PC-3 (cell line): ENCODE measurements at regions of chr11 and their contacts with region 1.

Region 1: DNA sequence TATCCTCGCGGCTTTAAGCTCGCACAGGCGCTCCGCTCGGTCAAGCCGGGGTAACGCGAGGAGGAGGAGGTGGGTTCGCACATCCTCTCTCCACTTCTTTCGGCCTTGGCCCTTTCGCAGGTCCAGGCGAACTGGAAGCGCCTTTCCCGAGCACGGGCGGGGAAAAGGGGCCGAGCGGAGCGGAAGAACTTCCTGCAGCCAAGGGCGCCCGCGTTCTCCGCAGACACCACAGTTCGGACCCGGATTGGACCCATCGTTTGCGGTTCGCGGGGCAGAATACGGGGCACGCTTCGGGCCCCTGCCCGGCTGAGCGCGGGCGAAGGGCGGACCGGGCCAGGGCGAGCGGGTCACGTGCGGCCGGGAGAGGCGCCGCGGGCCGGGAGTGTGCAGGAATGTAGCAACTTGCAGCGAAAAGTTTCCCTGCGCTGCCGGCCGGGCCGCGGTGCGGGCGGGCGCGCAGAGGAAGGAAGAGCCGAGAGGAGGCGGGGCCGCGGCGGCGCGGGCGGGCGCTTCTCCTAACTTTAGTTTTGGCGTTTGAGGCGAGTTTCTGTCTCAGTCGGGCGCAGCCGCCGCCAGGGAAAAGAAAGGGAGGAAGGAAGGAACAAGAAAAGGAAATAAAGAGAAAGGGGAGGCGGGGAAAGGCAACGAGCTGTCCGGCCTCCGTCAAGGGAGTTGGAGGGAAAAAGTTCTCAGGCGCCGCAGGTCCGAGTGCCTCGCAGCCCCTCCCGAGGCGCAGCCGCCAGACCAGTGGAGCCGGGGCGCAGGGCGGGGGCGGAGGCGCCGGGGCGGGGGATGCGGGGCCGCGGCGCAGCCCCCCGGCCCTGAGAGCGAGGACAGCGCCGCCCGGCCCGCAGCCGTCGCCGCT is at the start of gene YAP1:
- DNase-seq: peak; percentile 95
- ATAC-seq: peak; percentile 53
- H3K4me3 ChIP-seq: peak within 1 kb of the TSS; percentile 70
- H3K27ac ChIP-seq: peak within 1 kb of the TSS; percentile 87
- H3K4me1 ChIP-seq: peaks cover 26% of the 10 kb centered on the region
- H3K27me3 ChIP-seq: no peaks in the 10 kb centered on the region
- CTCF ChIP-seq: no peak; the same call in 1 of the 2 replicates
- total RNA-seq, gene YAP1: 104 and 118 TPM in 2 replicates

Region 2: DNA sequence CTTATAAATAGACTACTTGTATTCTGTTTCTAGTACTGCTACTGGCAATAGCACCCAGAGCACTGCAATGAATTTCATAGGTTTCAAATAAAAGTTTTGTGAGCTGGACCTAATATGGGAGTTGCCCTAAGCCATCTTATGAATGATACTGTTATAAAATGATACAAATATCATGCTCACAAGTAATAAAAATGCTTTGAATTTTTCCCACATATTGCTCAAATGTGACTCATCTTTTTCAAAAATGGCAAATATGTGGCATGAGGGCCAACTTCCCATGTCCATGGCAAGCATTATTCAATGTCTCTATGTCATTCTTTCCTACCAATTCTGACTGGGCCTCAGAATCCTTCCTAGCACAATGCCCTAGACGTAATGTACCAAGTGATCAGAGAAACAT is 663.9 kb before region 1 on chr11:
- CTCF ChIA-PET with region 1: no interaction called
- POLR2A ChIA-PET with region 1: no interaction called
- intact Hi-C with region 1: loop called (anchors 5 kb)
- DNase-seq: peak; percentile 94
- ATAC-seq: peak; percentile 88
- H3K4me3 ChIP-seq: peak overlapping the region; percentile 0; the same call in 1 of the 2 replicates
- H3K27ac ChIP-seq: peak overlapping the region; percentile 79
- H3K4me1 ChIP-seq: peaks cover 41% of the 10 kb centered on the region
- H3K27me3 ChIP-seq: no peaks in the 10 kb centered on the region
- CTCF ChIP-seq: no peak

Region 3: GRCh38 chr11:101835506-101836063 is 274.5 kb before region 1 on chr11:
- CTCF ChIA-PET with region 1: no interaction called
- POLR2A ChIA-PET with region 1: no interaction called
- intact Hi-C with region 1: no loop called
- DNase-seq: peak; percentile 89
- ATAC-seq: peak; percentile 95
- H3K4me3 ChIP-seq: peak overlapping the region; percentile 33; the same call in 1 of the 2 replicates
- H3K27ac ChIP-seq: peak overlapping the region; percentile 55
- H3K4me1 ChIP-seq: peaks cover 14% of the 10 kb centered on the region
- H3K27me3 ChIP-seq: no peaks in the 10 kb centered on the region
- CTCF ChIP-seq: no peak

Region 4: DNA sequence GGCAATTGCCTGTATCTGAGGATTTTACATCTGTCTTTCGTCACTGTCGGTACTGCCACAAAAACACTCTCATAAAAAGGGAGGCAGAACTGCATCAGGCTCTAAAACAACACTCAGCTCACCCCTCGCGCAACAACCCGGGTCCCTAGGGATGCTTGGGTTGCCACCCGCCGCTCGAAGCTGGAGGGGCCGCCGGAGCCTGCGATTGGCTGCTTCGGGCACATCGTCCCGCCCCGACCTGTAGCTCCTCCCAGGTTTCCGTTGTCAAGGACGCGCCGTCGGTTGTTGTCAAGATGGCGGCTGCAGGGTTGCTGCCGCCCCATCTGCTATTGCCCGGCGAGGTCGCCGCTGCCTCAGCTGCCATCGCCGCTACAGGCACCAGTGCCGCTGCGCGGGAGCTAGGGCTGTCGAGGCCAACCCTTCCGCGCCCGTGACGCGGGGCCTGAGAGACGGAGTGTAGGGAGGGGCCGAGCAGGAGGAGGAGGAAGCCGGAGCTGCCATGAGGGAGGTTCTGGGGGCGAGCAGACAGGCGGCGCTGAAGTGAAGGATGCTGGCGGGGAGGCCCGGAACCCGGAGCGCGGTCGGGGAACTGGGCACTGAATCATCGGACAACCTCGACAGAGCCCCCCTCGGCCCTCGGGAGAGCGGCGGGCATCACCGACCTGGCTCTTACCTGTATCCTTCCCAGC is 195.2 kb before region 1 on chr11 and contains the start of gene CEP126:
- CTCF ChIA-PET with region 1: no interaction called
- POLR2A ChIA-PET with region 1: interaction called, 3 read pairs
- intact Hi-C with region 1: loop called (anchors 5 kb)
- DNase-seq: peak; percentile 95
- ATAC-seq: peak; percentile 89
- H3K4me3 ChIP-seq: peak within 1 kb of the TSS; percentile 78
- H3K27ac ChIP-seq: peak within 1 kb of the TSS; percentile 54
- H3K4me1 ChIP-seq: peaks cover 35% of the 10 kb centered on the region
- H3K27me3 ChIP-seq: no peaks in the 10 kb centered on the region
- CTCF ChIP-seq: peak; percentile 58
- total RNA-seq, gene CEP126: 1.0 and 2.5 TPM in 2 replicates

Region 5: DNA sequence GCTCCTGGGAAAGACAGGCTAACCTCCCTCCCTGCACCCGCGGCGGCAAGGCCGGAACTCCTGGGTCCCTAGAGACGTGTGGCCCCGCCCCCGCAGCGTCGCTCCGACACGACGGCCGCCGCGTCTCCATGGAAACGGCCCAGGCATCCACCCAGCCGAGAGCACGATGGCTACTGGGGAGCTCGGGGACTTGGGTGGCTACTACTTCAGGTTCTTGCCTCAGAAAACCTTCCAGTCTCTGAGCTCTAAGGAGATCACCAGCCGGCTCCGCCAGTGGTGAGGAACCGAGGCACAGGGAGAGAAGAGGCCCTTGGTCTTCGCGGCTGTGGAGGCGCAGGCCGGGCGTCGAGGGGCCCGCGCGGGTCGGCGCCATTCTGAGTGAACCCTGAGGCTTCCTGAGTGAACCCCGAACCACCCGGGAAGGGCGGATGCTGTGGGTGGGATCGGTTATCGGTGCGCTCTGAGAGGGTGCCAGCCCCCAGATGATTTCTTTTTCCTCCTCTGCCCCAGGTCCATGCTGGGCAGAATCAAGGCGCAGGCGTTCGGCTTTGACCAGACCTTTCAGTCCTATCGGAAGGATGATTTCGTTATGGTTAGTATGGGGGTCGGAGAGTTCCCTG is 62.7 kb before region 1 on chr11 and contains the start of gene CFAP300:
- CTCF ChIA-PET with region 1: no interaction called
- POLR2A ChIA-PET with region 1: no interaction called
- intact Hi-C with region 1: loop called (anchors 1 kb)
- DNase-seq: peak; percentile 77
- ATAC-seq: peak; percentile 95
- H3K4me3 ChIP-seq: peak within 1 kb of the TSS; percentile 78
- H3K27ac ChIP-seq: no peak within 1 kb of the TSS
- H3K4me1 ChIP-seq: no peaks in the 10 kb centered on the region
- H3K27me3 ChIP-seq: no peaks in the 10 kb centered on the region
- CTCF ChIP-seq: no peak
- total RNA-seq, gene CFAP300: 3.2 and 3.9 TPM in 2 replicates

Region 6: DNA sequence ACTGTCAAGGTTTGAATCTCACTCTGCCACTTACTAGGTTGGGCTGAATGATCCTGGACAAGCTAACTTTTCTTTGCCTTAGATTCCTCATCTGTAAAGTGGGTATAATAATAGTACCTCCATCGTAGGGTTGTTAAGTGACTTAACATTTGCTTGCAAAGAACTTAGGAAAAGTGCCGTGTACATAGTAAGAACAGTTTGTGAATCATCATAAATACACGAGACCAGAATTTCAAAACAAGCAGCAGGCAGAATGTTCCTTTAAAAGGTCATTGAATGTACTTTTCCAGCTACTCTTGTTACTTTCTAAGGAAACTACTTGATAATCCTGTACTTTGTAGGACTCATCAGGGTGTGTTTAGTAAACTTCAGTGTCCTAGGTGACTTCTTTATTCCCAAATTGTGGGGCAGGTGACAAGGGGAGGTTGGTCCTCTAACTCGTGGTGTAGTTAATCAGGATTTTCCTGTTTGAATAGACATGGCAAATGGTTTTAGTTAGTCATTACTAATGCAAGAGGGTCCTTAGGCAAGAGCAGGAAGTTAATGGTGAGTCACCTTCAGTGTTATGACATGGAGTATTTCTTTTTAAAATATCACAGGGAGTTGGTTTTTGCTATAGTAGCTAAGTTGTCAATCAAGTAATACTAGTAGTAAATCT is 68.0 kb after region 1 on chr11:
- CTCF ChIA-PET with region 1: no interaction called
- POLR2A ChIA-PET with region 1: no interaction called
- intact Hi-C with region 1: loop called (anchors 1 kb)
- DNase-seq: peak; percentile 99
- ATAC-seq: peak; percentile 90
- H3K4me3 ChIP-seq: peak overlapping the region; percentile 26; the same call in 1 of the 2 replicates
- H3K27ac ChIP-seq: peak overlapping the region; percentile 80
- H3K4me1 ChIP-seq: peaks cover 27% of the 10 kb centered on the region
- H3K27me3 ChIP-seq: no peaks in the 10 kb centered on the region
- CTCF ChIP-seq: no peak

Region 7: DNA sequence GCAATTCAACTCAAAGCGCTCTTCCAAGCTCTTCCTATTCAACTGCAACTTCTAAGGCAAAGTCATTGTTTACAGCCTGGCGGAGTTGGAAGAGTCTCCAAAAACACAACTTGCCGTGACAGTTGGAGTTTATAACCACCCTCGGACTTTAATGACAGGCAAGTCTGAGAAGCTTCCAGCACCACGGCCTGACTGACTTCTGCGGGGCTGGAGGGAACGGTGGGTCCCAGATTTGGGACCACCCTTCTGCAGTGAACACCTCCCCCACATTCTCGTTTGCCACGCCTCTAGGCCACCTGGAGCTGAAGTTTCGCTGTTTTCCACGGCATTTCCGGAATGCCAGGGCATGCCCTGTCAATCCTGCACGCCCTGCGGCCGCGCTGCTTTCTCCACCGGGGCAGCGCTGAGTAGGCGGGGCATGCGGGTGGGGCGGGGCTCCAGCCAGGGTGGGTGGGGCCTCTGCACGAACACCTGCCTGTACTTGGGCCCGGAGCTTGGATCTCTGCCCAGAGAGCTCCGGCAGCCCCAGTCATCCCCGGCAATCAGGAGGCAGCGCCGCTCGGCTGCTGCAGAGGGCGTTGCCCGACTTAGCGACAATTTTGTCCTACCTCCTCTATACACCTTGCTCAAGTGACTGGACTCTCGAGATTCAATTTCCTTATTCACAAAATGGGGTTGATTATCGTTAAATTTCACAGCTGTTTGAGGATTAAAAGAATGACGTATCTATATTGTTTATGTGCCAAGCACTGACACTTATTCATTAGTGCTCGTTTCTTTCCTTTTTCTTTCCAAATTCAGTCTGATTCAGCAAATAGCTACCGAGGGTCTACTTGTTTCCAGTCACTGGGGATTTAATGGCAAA is 158.4 kb after region 1 on chr11:
- CTCF ChIA-PET with region 1: interaction called, 3 read pairs
- POLR2A ChIA-PET with region 1: no interaction called
- intact Hi-C with region 1: loop called (anchors 1 kb)
- DNase-seq: peak; percentile 98
- ATAC-seq: peak; percentile 97
- H3K4me3 ChIP-seq: peak overlapping the region; percentile 85
- H3K27ac ChIP-seq: peak overlapping the region; percentile 65
- H3K4me1 ChIP-seq: peaks cover 33% of the 10 kb centered on the region
- H3K27me3 ChIP-seq: no peaks in the 10 kb centered on the region
- CTCF ChIP-seq: peak; percentile 73